ENCODE measurements at regions of chr12 and their contacts with region 1.

Region 1: GRCh38 chr12:11648831-11649702 is at the start of gene ETV6:
- DNase-seq: peak; percentile 90
- H3K4me3 Mint-ChIP-seq: peak within 1 kb of the TSS; percentile 98
- H3K27ac Mint-ChIP-seq: peak within 1 kb of the TSS; percentile 99
- H3K4me1 Mint-ChIP-seq: peaks cover 27% of the 10 kb centered on the region
- H3K27me3 Mint-ChIP-seq: no peaks in the 10 kb centered on the region
- total RNA-seq, gene ETV6: 48.1 to 48.6 TPM

Region 2: DNA sequence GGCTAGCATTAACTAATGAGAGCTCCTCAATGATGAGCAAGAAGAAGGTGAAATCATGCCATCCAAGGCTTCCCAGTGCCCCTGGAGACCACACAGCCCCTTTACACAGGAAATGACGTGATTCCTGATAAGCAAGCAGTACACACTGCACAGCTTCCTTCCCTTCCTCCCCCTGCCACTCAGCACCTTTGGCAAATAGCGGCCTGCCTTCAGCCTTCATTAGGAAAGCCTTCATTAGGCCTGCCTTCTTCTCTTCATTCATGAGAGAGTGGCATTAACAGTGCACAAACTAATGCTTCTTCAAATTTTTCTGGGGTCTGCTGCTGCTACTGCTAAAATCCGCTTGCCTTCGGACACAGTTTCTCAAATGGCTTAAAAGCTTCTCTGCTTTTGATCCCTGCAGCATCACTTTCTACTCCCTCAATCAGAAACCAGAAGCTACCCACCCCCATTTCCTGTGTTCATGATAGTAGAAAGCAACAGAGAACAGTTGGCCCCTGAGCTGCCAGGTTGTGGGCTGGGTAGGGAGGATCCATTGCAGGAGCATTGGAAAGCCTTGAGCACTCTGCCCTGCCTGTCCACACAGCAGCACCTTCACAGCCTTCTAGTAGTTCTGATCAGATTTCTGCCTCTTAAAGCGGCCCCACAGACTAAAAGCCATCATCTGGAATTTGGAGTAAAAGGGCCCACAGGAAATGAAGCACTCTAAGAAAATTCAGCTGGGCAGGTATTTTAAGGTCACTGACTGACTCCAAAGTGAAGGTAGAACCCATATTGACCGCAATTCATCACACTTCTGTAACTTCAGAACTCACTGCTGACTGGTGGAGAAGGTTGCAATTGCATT is 103.4 kb before region 1 on chr12:
- CTCF ChIA-PET with region 1: no interaction called
- intact Hi-C with region 1: loop called (anchors 2 kb)
- DNase-seq: peak; percentile 60
- H3K4me3 Mint-ChIP-seq: peak overlapping the region; percentile 26
- H3K27ac Mint-ChIP-seq: peak overlapping the region; percentile 81
- H3K4me1 Mint-ChIP-seq: peaks cover 55% of the 10 kb centered on the region
- H3K27me3 Mint-ChIP-seq: no peaks in the 10 kb centered on the region

Region 3: GRCh38 chr12:11702959-11703358 is 53.9 kb after region 1 on chr12:
- CTCF ChIA-PET with region 1: no interaction called
- intact Hi-C with region 1: loop called (anchors 1 kb)
- DNase-seq: peak; percentile 14
- H3K4me3 Mint-ChIP-seq: no peak overlapping the region
- H3K27ac Mint-ChIP-seq: peak overlapping the region; percentile 76
- H3K4me1 Mint-ChIP-seq: peaks cover 49% of the 10 kb centered on the region
- H3K27me3 Mint-ChIP-seq: no peaks in the 10 kb centered on the region

Region 4: DNA sequence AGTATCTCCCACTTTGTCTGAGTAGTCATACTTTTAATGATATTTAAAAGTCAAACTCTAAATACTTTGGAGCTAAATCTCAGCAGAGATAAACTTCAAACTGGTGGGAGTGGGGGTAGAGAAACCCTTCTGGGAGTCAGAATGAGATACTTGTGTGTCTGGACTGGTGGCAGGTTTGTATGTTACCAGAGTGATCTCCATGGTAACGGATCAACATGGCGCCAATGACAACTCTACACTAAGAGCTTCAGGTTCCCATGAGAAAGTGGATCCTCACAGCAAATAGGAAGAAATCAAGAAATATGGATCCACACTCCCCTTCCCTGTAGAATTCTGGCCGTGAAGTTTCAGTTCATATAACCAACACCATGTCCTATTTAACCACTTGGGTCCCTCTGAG is 122.3 kb after region 1 on chr12:
- CTCF ChIA-PET with region 1: interaction called, 3 read pairs
- intact Hi-C with region 1: loop called (anchors 1 kb)
- DNase-seq: peak; percentile 41
- H3K4me3 Mint-ChIP-seq: no peak overlapping the region
- H3K27ac Mint-ChIP-seq: peak overlapping the region; percentile 68
- H3K4me1 Mint-ChIP-seq: peaks cover 94% of the 10 kb centered on the region
- H3K27me3 Mint-ChIP-seq: no peaks in the 10 kb centered on the region

Region 5: GRCh38 chr12:11836282-11837151 is 187.4 kb after region 1 on chr12:
- CTCF ChIA-PET with region 1: no interaction called
- intact Hi-C with region 1: loop called (anchors 1 kb)
- DNase-seq: peak; percentile 92
- H3K4me3 Mint-ChIP-seq: no peak overlapping the region
- H3K27ac Mint-ChIP-seq: peak overlapping the region; percentile 97
- H3K4me1 Mint-ChIP-seq: peaks cover 68% of the 10 kb centered on the region
- H3K27me3 Mint-ChIP-seq: no peaks in the 10 kb centered on the region

Region 6: DNA sequence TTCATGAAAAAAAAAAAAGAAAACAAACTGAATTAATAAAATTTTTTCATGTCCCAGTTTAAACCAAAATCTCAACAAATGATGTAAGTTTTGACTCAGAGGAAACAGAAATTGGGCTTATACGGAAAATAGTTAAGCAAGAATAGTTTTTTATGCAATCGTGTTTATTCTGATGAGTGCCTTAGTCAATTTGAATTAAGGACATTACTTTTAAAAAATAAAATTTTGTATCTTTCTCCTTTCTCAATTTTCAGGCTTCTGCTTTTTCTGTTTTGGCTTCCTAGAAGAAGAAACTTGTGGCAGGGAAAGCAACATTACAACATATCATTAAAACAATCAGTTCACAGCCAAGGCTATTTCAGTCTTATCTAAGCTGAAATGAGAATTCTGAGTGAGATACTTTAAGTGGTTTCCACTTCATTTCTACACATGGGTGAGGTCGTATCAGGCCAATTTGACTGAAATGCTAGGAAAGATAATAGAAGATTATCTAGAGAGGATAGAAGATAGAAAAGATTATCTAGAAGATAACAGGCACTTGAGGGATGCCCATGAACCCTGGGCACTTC is 474.1 kb after region 1 on chr12:
- CTCF ChIA-PET with region 1: no interaction called
- intact Hi-C with region 1: no loop called
- DNase-seq: no peak
- H3K4me3 Mint-ChIP-seq: no peak overlapping the region
- H3K27ac Mint-ChIP-seq: no peak overlapping the region
- H3K4me1 Mint-ChIP-seq: no peaks in the 10 kb centered on the region
- H3K27me3 Mint-ChIP-seq: no peaks in the 10 kb centered on the region

Region 7: DNA sequence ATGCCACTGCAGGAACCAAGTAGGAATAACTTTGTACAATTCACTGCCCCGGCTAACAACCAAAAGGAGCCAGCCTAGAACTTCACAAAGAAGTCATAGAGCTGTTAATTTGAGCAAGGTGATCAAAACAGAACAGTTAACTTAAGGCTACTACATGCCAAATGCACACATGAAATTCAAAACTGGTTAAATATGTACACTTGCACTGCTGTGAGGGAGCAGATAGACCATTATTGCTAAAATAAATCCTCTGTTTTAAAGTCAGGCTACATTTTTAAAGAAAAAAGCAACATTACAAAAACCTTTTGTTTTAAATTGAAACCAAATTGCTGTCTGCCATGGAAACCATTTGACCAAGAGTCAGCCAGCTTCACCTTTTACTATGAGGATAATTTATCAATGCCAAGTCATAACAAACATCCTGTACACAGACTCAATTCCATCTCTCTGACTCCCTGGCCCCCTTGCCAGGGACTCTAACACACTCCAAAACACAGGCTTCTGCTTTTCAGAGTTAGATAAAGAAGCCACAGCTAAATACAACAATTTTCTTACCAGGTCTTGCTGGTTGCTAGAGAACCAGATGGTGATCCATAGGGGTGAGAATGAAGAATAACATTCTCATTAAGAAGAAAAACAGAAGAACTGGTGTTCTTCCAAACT is 533.8 kb after region 1 on chr12:
- CTCF ChIA-PET with region 1: no interaction called
- intact Hi-C with region 1: no loop called
- DNase-seq: no peak
- H3K4me3 Mint-ChIP-seq: no peak overlapping the region
- H3K27ac Mint-ChIP-seq: no peak overlapping the region
- H3K4me1 Mint-ChIP-seq: no peaks in the 10 kb centered on the region
- H3K27me3 Mint-ChIP-seq: no peaks in the 10 kb centered on the region

Region 8: DNA sequence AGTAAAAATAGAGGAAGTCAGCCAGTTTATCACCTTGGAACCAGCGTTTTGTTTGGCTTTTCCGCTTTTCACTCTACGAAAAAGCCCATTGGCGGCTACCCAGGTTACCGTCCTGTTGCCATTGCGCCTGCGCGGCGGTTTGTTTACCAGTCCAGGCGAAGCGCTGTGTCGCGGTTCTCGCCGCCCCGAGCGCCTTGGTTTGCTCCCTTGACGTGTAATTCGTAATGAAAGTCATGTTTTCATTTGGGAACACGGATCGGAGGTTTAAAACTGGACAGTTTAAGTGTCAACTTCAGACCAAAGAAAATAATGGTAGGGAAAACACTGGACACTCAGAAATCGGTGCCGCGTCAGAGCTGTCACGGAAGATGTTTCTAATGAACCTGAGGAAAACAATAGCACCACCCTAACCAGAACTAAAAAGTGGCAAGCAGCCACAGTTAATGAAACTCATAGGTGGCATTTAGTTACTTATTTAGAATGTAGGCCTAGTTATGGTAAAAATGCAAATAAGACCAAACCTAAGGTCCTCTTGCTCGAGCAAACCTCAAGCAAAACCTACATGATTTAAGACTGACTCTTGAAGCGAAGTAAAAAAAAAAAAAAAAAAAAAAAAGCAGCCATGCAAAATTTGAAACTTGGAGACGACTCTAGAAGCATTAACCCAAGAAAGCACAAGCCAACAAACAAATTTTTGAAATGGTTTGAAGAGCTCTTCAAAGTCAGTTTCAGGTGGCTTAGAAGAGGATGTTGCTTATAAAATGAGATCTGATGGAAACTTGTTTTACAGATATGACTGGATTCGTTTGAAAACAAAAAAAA is 1047.7 kb after region 1 on chr12:
- CTCF ChIA-PET with region 1: no interaction called
- intact Hi-C with region 1: loop called (anchors 2 kb)
- DNase-seq: peak; percentile 93
- H3K4me3 Mint-ChIP-seq: peak overlapping the region; percentile 97
- H3K27ac Mint-ChIP-seq: peak overlapping the region; percentile 98
- H3K4me1 Mint-ChIP-seq: peaks cover 38% of the 10 kb centered on the region
- H3K27me3 Mint-ChIP-seq: no peaks in the 10 kb centered on the region